CD4-positive, alpha-beta T cell (primary cell): ENCODE measurements at regions of chr2 and their contacts with region 1.

Region 1: GRCh38 chr2:101252408-101253012 is at the start of gene CNOT11:
- DNase-seq: peak; percentile 98 to 100 (median 99)
- ATAC-seq: peak; percentile 77
- H3K4me3 ChIP-seq: peak within 1 kb of the TSS; percentile 90
- H3K4me3 Mint-ChIP-seq: peak within 1 kb of the TSS; percentile 97
- H3K27ac ChIP-seq: peak within 1 kb of the TSS; percentile 92 to 98
- H3K27ac Mint-ChIP-seq: peak within 1 kb of the TSS; percentile 93
- H3K4me1 ChIP-seq: peaks cover 50% of the 10 kb centered on the region
- H3K4me1 Mint-ChIP-seq: peaks cover 55% of the 10 kb centered on the region
- H3K27me3 ChIP-seq: no peaks in the 10 kb centered on the region
- H3K27me3 Mint-ChIP-seq: no peaks in the 10 kb centered on the region
- CTCF ChIP-seq: peak; percentile 2
- total RNA-seq, gene CNOT11: 39.4 to 46.8 TPM

Region 2: DNA sequence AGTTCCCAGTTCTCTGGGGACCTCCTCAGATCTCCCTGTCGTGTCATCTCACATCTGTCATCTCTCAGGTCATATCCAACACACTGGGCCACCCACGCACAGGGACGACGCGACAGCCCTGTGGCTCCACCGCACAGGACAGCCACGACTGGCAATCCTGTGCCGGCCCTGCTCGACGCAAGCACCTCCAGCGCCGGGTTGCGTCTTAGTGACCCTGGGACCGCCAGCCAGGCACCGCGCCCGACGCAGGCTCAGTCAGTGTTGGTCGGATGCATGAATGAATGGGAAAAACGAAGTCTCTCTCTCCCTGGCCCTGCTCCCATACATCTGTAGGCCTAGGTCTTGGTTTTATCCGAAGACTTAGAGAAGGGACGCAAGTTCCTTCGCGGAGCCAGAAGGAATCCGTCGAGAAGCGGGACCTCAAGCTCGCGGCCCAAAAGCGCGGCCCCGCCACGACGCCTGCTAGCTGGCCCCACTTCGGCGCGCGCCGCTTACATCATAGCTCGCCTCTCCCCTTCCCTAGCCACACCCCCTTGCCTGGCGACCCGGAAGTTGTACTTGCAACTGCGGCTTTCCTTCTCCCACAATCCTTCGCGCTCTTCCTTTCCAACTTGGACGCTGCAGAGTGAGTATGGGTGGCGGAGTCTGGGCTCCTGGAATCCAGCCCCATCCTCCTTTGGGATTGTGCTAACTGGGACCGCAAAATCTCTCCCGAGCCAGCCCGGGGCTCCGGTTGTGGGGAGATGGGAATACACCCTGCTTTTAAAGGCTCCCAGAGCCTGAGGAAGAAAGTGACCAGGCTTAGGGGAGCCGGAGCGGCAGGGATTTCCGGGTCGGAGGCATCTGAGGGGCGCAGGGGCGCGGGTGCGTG is 250.6 kb before region 1 on chr2 and contains the start of gene RPL31:
- CTCF ChIA-PET with region 1: no interaction called
- POLR2A ChIA-PET with region 1: interaction called, 11 read pairs
- intact Hi-C with region 1: loop called (anchors 5 kb)
- DNase-seq: peak; percentile 90 to 98 (median 94)
- ATAC-seq: peak; percentile 95
- H3K4me3 ChIP-seq: peak within 1 kb of the TSS; percentile 82
- H3K4me3 Mint-ChIP-seq: peak within 1 kb of the TSS; percentile 90
- H3K27ac ChIP-seq: peak within 1 kb of the TSS; percentile 80 to 83
- H3K27ac Mint-ChIP-seq: peak within 1 kb of the TSS; percentile 91
- H3K4me1 ChIP-seq: peaks cover 36% of the 10 kb centered on the region
- H3K4me1 Mint-ChIP-seq: peaks cover 52% of the 10 kb centered on the region
- H3K27me3 ChIP-seq: no peaks in the 10 kb centered on the region
- H3K27me3 Mint-ChIP-seq: no peaks in the 10 kb centered on the region
- CTCF ChIP-seq: no peak
- total RNA-seq, gene RPL31: 2,901 to 2,913 TPM

Region 3: DNA sequence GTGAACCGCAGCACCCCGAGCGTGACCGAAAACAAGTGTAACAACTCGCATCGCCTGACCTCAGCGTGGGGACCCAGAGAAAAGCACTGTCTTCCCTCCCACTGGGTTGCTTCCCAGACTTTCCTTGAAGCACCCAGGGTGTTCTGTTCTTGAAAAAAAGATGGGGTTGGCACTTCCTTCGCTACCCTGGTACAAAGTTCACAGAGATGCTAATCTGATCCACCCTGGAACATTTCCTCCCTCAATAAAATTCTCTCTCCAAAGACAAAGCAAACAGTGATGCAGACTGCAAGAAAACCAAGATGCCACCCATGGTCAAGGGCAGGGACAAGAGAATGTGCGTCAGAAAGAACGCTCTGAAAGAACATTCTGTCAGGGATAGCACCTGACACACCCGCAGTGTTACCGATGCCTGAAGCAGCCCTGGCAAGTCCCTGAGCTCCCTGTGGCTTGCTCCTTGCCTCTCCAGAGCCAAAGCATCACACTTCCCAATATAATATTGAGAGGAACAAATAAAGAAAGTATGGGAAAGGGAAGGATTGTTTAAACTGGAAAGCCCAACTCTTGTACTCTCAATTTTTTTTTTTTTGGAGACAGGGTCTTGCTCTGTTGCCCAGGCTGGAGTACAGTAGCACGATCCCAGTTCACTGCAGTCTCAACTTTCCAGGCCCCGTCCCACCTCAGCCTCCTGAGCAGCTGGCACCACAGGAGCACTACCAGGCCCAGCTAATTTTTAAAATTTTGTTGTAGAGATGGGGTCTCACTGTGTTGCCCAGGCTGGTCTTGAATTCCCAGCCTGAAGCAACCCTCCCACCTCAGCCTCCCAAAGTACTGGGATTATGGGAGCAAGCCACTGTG is 172.1 kb before region 1 on chr2:
- CTCF ChIA-PET with region 1: no interaction called
- POLR2A ChIA-PET with region 1: no interaction called
- intact Hi-C with region 1: no loop called
- DNase-seq: no peak
- ATAC-seq: no peak
- H3K4me3 ChIP-seq: no peak overlapping the region
- H3K4me3 Mint-ChIP-seq: no peak overlapping the region
- H3K27ac ChIP-seq: no peak overlapping the region
- H3K27ac Mint-ChIP-seq: no peak overlapping the region
- H3K4me1 ChIP-seq: no peaks in the 10 kb centered on the region
- H3K4me1 Mint-ChIP-seq: no peaks in the 10 kb centered on the region
- H3K27me3 ChIP-seq: no peaks in the 10 kb centered on the region
- H3K27me3 Mint-ChIP-seq: no peaks in the 10 kb centered on the region
- CTCF ChIP-seq: no peak

Region 4: GRCh38 chr2:101238930-101239759 is 13.4 kb before region 1 on chr2:
- CTCF ChIA-PET with region 1: interaction called, 4 read pairs
- POLR2A ChIA-PET with region 1: interaction called, 13 read pairs
- intact Hi-C with region 1: no loop called
- DNase-seq: no peak
- ATAC-seq: no peak
- H3K4me3 ChIP-seq: no peak overlapping the region
- H3K4me3 Mint-ChIP-seq: no peak overlapping the region
- H3K27ac ChIP-seq: no peak overlapping the region
- H3K27ac Mint-ChIP-seq: no peak overlapping the region
- H3K4me1 ChIP-seq: no peaks in the 10 kb centered on the region
- H3K4me1 Mint-ChIP-seq: no peaks in the 10 kb centered on the region
- H3K27me3 ChIP-seq: no peaks in the 10 kb centered on the region
- H3K27me3 Mint-ChIP-seq: no peaks in the 10 kb centered on the region
- CTCF ChIP-seq: no peak

Region 5: GRCh38 chr2:101308432-101309210 is 56.1 kb after region 1 on chr2 and contains the start of gene RNF149:
- CTCF ChIA-PET with region 1: interaction called, 3 read pairs
- POLR2A ChIA-PET with region 1: interaction called, 17 read pairs
- intact Hi-C with region 1: loop called (anchors 1 kb)
- DNase-seq: peak; percentile 82 to 95 (median 93)
- ATAC-seq: peak; percentile 56
- H3K4me3 ChIP-seq: peak within 1 kb of the TSS; percentile 90
- H3K4me3 Mint-ChIP-seq: peak within 1 kb of the TSS; percentile 98
- H3K27ac ChIP-seq: peak within 1 kb of the TSS; percentile 85 to 95
- H3K27ac Mint-ChIP-seq: peak within 1 kb of the TSS; percentile 96
- H3K4me1 ChIP-seq: peaks cover 67% of the 10 kb centered on the region
- H3K4me1 Mint-ChIP-seq: peaks cover 79% of the 10 kb centered on the region
- H3K27me3 ChIP-seq: no peaks in the 10 kb centered on the region
- H3K27me3 Mint-ChIP-seq: no peaks in the 10 kb centered on the region
- CTCF ChIP-seq: no peak
- total RNA-seq, gene RNF149: 139 to 150 TPM

Region 6: DNA sequence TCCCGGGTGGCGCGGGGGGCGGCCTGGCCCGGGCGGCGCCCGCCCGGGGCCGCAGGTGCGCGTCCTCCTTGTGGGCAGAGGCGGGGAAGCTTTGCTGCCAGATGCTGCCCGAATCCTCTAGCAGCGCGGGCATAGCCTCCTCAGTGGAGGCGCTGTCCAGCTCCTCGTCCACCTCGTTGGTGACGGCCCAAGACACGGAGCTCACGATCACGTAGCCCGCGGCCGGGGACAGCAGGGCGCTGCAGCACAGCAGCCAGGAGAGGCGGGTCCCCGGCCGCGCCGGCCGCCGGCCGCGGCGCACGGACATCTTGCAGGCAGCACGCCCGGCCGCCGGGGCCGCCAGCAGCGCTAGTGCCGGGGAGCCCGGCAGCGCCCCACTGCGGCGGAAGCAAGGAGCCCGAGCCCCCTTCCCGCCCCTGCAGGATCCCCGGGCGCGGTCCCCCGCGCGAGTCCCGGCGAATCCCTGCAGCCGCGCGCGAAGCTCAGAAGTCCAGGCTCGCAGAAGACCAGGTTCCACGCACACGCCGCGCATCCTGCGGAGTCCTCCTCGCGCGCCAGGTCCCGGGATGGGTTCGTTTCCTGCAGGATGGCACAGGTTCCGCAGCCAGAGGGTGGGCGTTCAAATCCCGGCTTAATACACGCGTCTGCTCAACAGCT is 134.8 kb after region 1 on chr2 and contains the start of gene CREG2:
- CTCF ChIA-PET with region 1: no interaction called
- POLR2A ChIA-PET with region 1: no interaction called
- intact Hi-C with region 1: loop called in 1 of 2 experiments (anchors 5 kb)
- DNase-seq: peak; percentile 27 to 80 (median 49)
- ATAC-seq: peak; percentile 93
- H3K4me3 ChIP-seq: peak within 1 kb of the TSS; percentile 44
- H3K4me3 Mint-ChIP-seq: peak within 1 kb of the TSS; percentile 79
- H3K27ac ChIP-seq: no peak within 1 kb of the TSS
- H3K27ac Mint-ChIP-seq: no peak within 1 kb of the TSS
- H3K4me1 ChIP-seq: peaks cover 13% of the 10 kb centered on the region
- H3K4me1 Mint-ChIP-seq: peaks cover 11% of the 10 kb centered on the region
- H3K27me3 ChIP-seq: peaks cover 20 to 38% of the 10 kb centered on the region in 2 experiments
- H3K27me3 Mint-ChIP-seq: peaks cover 61% of the 10 kb centered on the region
- CTCF ChIP-seq: peak; percentile 56
- total RNA-seq, gene CREG2: 0.03 TPM in 1 of 2 experiments, not detected in the other

Region 7: GRCh38 chr2:102240640-102241370 is 988.3 kb after region 1 on chr2:
- CTCF ChIA-PET with region 1: no interaction called
- POLR2A ChIA-PET with region 1: no interaction called
- intact Hi-C with region 1: no loop called
- DNase-seq: peak; percentile 74 to 93 (median 85)
- ATAC-seq: peak; percentile 94
- H3K4me3 ChIP-seq: no peak overlapping the region
- H3K4me3 Mint-ChIP-seq: no peak overlapping the region
- H3K27ac ChIP-seq: no peak overlapping the region
- H3K27ac Mint-ChIP-seq: no peak overlapping the region
- H3K4me1 ChIP-seq: peaks cover 21% of the 10 kb centered on the region
- H3K4me1 Mint-ChIP-seq: peaks cover 9% of the 10 kb centered on the region
- H3K27me3 ChIP-seq: no peaks in the 10 kb centered on the region
- H3K27me3 Mint-ChIP-seq: no peaks in the 10 kb centered on the region
- CTCF ChIP-seq: peak; percentile 93